Calu3 (cell line): ENCODE measurements at regions of chr5 and their contacts with region 1.

Region 1: DNA sequence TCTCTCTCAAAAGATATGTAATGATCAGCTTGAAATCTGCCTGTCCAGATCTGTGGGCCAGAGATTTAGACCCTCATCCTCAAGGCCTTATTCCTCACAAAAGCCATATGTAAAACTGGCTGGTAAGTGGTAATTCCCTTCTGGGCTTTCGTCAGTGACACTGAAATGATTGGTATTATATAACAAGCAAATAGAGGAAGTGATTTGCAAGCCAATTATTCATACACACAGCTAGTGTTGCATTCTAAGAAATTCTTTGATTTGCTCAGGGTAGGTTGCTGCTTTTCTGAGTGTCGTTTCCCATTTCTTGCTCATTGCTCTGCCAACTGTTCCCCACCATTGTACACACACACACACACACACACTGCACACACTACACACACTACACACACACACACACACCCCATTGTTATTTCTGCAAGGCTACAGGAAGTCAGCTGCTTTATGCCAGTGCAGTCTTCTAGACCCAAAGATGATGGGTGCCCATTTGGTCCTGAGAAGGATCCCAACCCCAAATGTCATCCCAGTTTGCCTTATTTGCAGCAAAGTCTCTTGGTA is 76.8 kb downstream of the PRLR start:
- DNase-seq: no peak
- H3K4me3 Mint-ChIP-seq: no peak overlapping the region
- H3K27ac Mint-ChIP-seq: no peak overlapping the region
- H3K4me1 Mint-ChIP-seq: no peaks in the 10 kb centered on the region
- H3K27me3 Mint-ChIP-seq: no peaks in the 10 kb centered on the region
- CTCF ChIP-seq: no peak

Region 2: DNA sequence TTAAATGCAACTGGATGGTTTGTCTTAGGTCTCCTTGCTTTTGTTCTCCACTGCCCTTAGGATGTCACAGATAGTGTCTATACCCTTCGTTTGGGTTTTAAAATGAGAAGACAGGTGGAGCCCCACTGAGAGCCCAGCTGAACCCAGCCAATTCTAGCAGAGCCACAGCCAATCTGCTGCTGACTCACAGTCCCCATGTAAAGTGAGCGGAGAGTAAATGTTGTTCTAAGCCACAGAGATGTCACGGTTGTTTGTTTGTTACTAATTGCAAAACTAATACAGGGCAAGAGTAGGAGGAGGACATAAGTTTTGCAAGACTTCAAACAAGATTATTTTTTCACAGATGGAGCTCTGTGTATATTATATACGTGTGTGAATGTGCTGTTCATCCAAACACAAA is 55.2 kb before region 1 on chr5:
- CTCF ChIA-PET with region 1: interaction called, 10 read pairs
- intact Hi-C with region 1: no loop called
- DNase-seq: no peak
- H3K4me3 Mint-ChIP-seq: no peak overlapping the region
- H3K27ac Mint-ChIP-seq: no peak overlapping the region
- H3K4me1 Mint-ChIP-seq: no peaks in the 10 kb centered on the region
- H3K27me3 Mint-ChIP-seq: no peaks in the 10 kb centered on the region
- CTCF ChIP-seq: no peak